ENCODE measurements at regions of chr9 and their contacts with region 1.

Region 1: DNA sequence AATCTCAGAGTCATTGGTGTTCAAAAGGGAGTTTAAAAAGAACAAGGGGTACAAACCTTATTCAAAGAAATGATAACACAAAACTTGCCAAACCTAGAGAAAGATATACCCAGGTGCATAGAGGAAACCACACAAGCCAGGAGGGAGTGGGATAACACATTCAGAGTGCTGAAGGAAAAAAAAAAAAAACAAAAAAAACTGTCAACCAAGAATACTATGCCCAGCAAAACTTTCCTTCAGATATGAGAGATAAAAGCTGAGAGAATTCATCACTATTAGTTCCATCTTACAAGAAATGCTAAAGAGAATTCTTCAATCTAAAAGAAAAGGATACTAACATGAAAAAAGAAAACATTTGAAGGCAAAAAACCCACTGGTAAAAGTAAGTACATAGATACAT is 11.5 kb upstream of the TESK1 start:
- DNase-seq: no peak
- ATAC-seq: no peak
- H3K4me3 ChIP-seq: no peak overlapping the region
- H3K27ac ChIP-seq: no peak overlapping the region
- H3K4me1 ChIP-seq: no peaks in the 10 kb centered on the region
- CTCF ChIP-seq: no peak
- EP300 ChIP-seq: no peak
- POLR2A ChIP-seq: no peak
- RAD21 ChIP-seq: no peak

Region 2: GRCh38 chr9:35603987-35604577 is 10.5 kb after region 1 on chr9:
- CTCF ChIA-PET with region 1: interaction called, 13 read pairs
- POLR2A ChIA-PET with region 1: interaction called, 3 read pairs
- DNase-seq: peak; percentile 99 to 100
- ATAC-seq: peak; percentile 82 to 95
- H3K4me3 ChIP-seq: peak overlapping the region; percentile 80
- H3K27ac ChIP-seq: peak overlapping the region; percentile 86 to 95
- H3K4me1 ChIP-seq: peaks cover 11% of the 10 kb centered on the region
- CTCF ChIP-seq: peak; percentile 90
- EP300 ChIP-seq: no peak
- POLR2A ChIP-seq: peak; percentile 84
- RAD21 ChIP-seq: peak; percentile 47 to 67

Region 3: DNA sequence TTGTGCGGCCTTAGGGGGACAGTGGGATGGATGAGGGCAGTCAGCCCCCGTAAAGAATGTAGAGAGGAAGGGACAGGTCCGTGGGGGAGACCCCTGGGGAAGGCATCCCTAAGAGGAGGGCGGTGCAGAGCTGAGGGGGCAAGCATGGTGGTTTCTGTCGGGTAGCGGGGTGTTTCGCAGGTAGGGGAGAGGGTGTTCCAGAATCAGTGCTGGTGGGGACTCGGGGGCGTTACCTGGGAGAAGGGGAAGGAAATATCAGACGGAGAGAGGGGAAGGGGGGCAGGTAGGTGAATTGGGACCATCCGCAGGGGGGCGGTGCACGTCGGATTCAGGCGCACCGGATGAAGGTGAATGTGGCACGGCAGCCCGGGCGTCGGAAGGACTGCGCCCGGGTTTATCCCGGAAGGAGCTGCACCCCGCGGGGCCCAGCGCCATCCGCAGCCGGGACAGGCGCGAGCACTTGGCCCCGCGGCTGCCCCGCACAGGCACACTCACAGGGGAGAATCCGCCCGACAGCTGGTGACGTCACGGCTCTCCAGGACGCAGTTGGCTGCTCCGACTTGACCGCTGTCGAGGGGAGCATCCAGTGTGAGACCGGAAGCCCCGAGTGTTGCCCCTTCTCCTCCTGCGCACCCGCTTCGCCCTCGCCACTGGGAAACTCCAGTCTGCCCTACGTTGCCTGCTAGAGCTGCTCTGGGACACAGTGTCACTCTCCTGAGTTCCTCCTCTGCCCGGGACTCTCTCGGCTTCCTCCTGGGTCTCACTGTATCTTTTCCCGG is 23.3 kb after region 1 on chr9:
- CTCF ChIA-PET with region 1: no interaction called
- POLR2A ChIA-PET with region 1: no interaction called
- DNase-seq: no peak
- ATAC-seq: peak in 1 of 2 experiments; percentile 52; a peak in 3 of 6 replicates
- H3K4me3 ChIP-seq: no peak overlapping the region
- H3K27ac ChIP-seq: no peak overlapping the region
- H3K4me1 ChIP-seq: no peaks in the 10 kb centered on the region
- CTCF ChIP-seq: no peak
- EP300 ChIP-seq: no peak
- POLR2A ChIP-seq: no peak
- RAD21 ChIP-seq: no peak

Measured in A549 (cell line).